GM12878 (cell line): ENCODE measurements at regions of chr22 and their contacts with region 1.

Region 1: DNA sequence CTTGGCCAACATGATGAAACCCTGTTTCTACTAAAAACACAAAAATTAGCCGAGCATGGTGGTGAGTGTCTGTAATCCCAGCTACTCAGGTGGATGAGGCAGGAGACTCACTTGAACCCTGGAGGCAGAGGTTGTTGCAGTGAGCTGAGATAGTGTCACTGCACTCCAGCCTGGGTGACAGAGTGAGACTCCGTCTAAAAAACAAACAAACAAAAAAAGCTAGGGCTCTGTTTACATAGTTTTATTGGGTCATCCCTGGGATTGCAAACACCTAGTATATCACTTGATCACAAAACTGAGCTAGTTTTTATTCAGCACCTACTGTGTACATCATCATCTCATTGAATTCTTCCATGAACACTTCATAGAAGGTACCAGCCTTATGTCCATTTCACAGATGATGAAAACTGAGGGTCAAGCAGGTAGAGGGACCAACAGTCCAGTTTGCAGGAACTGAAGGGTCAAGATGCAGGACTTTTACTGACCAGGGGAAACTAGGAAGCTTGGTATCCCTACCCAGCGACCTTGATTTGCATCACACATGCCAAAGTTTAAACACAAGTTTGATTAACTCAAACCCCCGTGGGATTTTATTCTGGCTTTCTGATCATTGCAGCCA is 9.2 kb upstream of the MRTFA start:
- DNase-seq: no peak
- ATAC-seq: no peak
- H3K4me3 ChIP-seq: no peak overlapping the region
- H3K27ac ChIP-seq: no peak overlapping the region
- H3K4me1 ChIP-seq: peaks cover 18% of the 10 kb centered on the region
- H3K27me3 ChIP-seq: no peaks in the 10 kb centered on the region
- CTCF ChIP-seq: no peak
- EP300 ChIP-seq: no peak
- POLR2A ChIP-seq: no peak
- RAD21 ChIP-seq: no peak

Region 2: GRCh38 chr22:40231618-40232313 is 413.9 kb before region 1 on chr22:
- CTCF ChIA-PET with region 1: no interaction called
- POLR2A ChIA-PET with region 1: no interaction called
- RAD21 ChIA-PET with region 1: no interaction called
- SMC1A ChIA-PET with region 1: no interaction called
- in situ Hi-C with region 1: no loop called
- intact Hi-C with region 1: no loop called
- DNase-seq: no peak
- ATAC-seq: no peak
- H3K4me3 ChIP-seq: no peak overlapping the region
- H3K27ac ChIP-seq: no peak overlapping the region
- H3K4me1 ChIP-seq: no peaks in the 10 kb centered on the region
- H3K27me3 ChIP-seq: no peaks in the 10 kb centered on the region
- CTCF ChIP-seq: no peak
- EP300 ChIP-seq: no peak
- POLR2A ChIP-seq: no peak
- RAD21 ChIP-seq: no peak

Region 3: GRCh38 chr22:40289991-40290459 is 355.7 kb before region 1 on chr22:
- CTCF ChIA-PET with region 1: no interaction called
- POLR2A ChIA-PET with region 1: no interaction called
- RAD21 ChIA-PET with region 1: no interaction called
- SMC1A ChIA-PET with region 1: no interaction called
- in situ Hi-C with region 1: no loop called
- intact Hi-C with region 1: no loop called
- DNase-seq: peak; percentile 26
- ATAC-seq: peak; percentile 97
- H3K4me3 ChIP-seq: no peak overlapping the region
- H3K27ac ChIP-seq: peak overlapping the region; percentile 59
- H3K4me1 ChIP-seq: no peaks in the 10 kb centered on the region
- H3K27me3 ChIP-seq: no peaks in the 10 kb centered on the region
- CTCF ChIP-seq: no peak
- EP300 ChIP-seq: no peak
- POLR2A ChIP-seq: no peak
- RAD21 ChIP-seq: no peak

Region 4: GRCh38 chr22:40487663-40488249 is 157.9 kb before region 1 on chr22:
- CTCF ChIA-PET with region 1: interaction called, 34 read pairs
- POLR2A ChIA-PET with region 1: interaction called, 5 read pairs
- RAD21 ChIA-PET with region 1: interaction called, 10 read pairs
- SMC1A ChIA-PET with region 1: interaction called, 28 read pairs
- in situ Hi-C with region 1: no loop called
- intact Hi-C with region 1: no loop called
- DNase-seq: no peak
- ATAC-seq: peak; percentile 48; the same call in 2 of the 3 replicates
- H3K4me3 ChIP-seq: no peak overlapping the region
- H3K27ac ChIP-seq: no peak overlapping the region
- H3K4me1 ChIP-seq: peaks cover 11% of the 10 kb centered on the region
- H3K27me3 ChIP-seq: no peaks in the 10 kb centered on the region
- CTCF ChIP-seq: peak; percentile 67 to 82 (median 67)
- EP300 ChIP-seq: no peak
- POLR2A ChIP-seq: no peak
- RAD21 ChIP-seq: peak; percentile 65

Region 5: GRCh38 chr22:40519284-40519947 is 126.3 kb before region 1 on chr22:
- CTCF ChIA-PET with region 1: interaction called, 339 read pairs
- POLR2A ChIA-PET with region 1: interaction called, 8 read pairs
- RAD21 ChIA-PET with region 1: interaction called, 137 read pairs
- SMC1A ChIA-PET with region 1: interaction called, 248 read pairs
- in situ Hi-C with region 1: no loop called
- intact Hi-C with region 1: loop called (anchors 1 kb)
- DNase-seq: no peak
- ATAC-seq: peak; percentile 93
- H3K4me3 ChIP-seq: peak overlapping the region; percentile 48; the same call in 1 of the 2 replicates
- H3K27ac ChIP-seq: peak overlapping the region; percentile 83
- H3K4me1 ChIP-seq: peaks cover 18% of the 10 kb centered on the region
- H3K27me3 ChIP-seq: no peaks in the 10 kb centered on the region
- CTCF ChIP-seq: no peak
- EP300 ChIP-seq: no peak
- POLR2A ChIP-seq: no peak
- RAD21 ChIP-seq: no peak

Region 6: DNA sequence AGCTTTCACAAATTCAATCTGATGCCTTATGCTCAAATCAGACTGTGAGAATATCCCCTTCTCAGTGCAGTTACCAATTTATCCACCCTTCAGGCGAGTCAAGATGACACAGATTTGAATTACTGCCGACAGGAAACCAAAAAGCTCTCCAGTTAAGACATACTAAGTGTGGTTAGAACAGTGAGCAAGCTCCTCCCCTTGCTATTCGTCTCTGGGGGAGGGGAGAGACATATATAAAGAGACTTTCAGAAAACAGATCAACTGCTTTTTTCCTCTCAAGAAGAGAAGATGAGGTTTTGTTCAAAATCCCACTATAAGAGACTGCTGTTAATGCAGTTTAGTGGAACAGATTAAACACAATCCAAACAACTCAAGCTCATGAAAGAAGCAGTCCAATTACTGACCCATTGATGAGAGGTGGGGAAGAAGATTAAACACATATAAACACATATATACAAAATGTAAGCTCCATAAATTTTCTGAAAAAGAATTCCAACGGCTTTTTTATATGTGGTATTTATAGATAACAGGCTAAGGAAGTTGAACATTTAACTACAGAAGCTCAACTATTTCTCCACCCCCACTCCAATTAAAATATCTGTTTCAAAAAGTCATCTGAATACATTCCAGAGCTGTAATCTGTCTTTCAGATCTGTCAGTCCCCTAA is 111.8 kb before region 1 on chr22:
- CTCF ChIA-PET with region 1: interaction called, 339 read pairs
- POLR2A ChIA-PET with region 1: interaction called, 11 read pairs
- RAD21 ChIA-PET with region 1: interaction called, 137 read pairs
- SMC1A ChIA-PET with region 1: interaction called, 248 read pairs
- in situ Hi-C with region 1: loop called (anchors 5 kb)
- intact Hi-C with region 1: no loop called
- DNase-seq: peak; percentile 74
- ATAC-seq: peak; percentile 88
- H3K4me3 ChIP-seq: peak overlapping the region; percentile 76
- H3K27ac ChIP-seq: peak overlapping the region; percentile 75
- H3K4me1 ChIP-seq: peaks cover 21% of the 10 kb centered on the region
- H3K27me3 ChIP-seq: no peaks in the 10 kb centered on the region
- CTCF ChIP-seq: no peak
- EP300 ChIP-seq: no peak
- POLR2A ChIP-seq: no peak
- RAD21 ChIP-seq: peak; percentile 15; the same call in 1 of the 2 replicates

Region 7: GRCh38 chr22:40597526-40598430 is 47.9 kb before region 1 on chr22:
- CTCF ChIA-PET with region 1: interaction called, 25 read pairs
- POLR2A ChIA-PET with region 1: no interaction called
- RAD21 ChIA-PET with region 1: interaction called, 7 read pairs
- SMC1A ChIA-PET with region 1: interaction called, 11 read pairs
- in situ Hi-C with region 1: no loop called
- intact Hi-C with region 1: no loop called
- DNase-seq: no peak
- ATAC-seq: no peak
- H3K4me3 ChIP-seq: no peak overlapping the region
- H3K27ac ChIP-seq: no peak overlapping the region; the same call in 1 of the 2 replicates
- H3K4me1 ChIP-seq: peaks cover 54% of the 10 kb centered on the region
- H3K27me3 ChIP-seq: no peaks in the 10 kb centered on the region
- CTCF ChIP-seq: 0 out of 6 replicates have a peak, but pooled peaks of 1 of the 3 experiments have one; percentile 0
- EP300 ChIP-seq: no peak
- POLR2A ChIP-seq: no peak
- RAD21 ChIP-seq: no peak

Region 8: GRCh38 chr22:40679964-40680818 is 34.5 kb after region 1 on chr22:
- CTCF ChIA-PET with region 1: interaction called, 13 read pairs
- POLR2A ChIA-PET with region 1: interaction called, 3 read pairs
- RAD21 ChIA-PET with region 1: interaction called, 6 read pairs
- SMC1A ChIA-PET with region 1: interaction called, 3 read pairs
- in situ Hi-C with region 1: no loop called
- intact Hi-C with region 1: no loop called
- DNase-seq: no peak
- ATAC-seq: no peak
- H3K4me3 ChIP-seq: no peak overlapping the region
- H3K27ac ChIP-seq: no peak overlapping the region
- H3K4me1 ChIP-seq: no peaks in the 10 kb centered on the region
- H3K27me3 ChIP-seq: peaks cover 0 to 3% of the 10 kb centered on the region in 2 experiments; a peak in 3 of 4 replicates
- CTCF ChIP-seq: no peak
- EP300 ChIP-seq: no peak
- POLR2A ChIP-seq: no peak
- RAD21 ChIP-seq: no peak

Region 9: DNA sequence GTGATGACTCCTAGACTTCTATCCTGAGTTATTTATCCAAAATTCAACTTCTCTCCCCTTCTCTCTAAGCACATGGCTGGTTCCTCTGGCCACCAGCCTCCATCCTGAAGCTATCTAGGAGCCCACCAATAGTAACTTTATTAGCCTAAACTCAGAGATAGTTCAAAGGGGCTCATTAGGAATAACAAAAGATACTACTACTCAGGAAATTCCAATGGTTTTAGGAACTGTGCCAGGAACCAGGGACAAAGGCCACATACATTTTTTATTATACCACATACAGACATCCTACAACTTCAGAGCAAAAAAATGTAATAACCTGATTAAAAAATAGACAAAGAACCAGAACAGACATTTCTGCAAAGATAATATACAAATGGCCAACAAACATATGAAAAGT is 145.6 kb after region 1 on chr22:
- CTCF ChIA-PET with region 1: no interaction called
- POLR2A ChIA-PET with region 1: no interaction called
- RAD21 ChIA-PET with region 1: no interaction called
- SMC1A ChIA-PET with region 1: no interaction called
- in situ Hi-C with region 1: no loop called
- intact Hi-C with region 1: no loop called
- DNase-seq: no peak
- ATAC-seq: no peak
- H3K4me3 ChIP-seq: no peak overlapping the region
- H3K27ac ChIP-seq: no peak overlapping the region
- H3K4me1 ChIP-seq: no peaks in the 10 kb centered on the region; the same call in 1 of the 2 replicates
- H3K27me3 ChIP-seq: no peaks in the 10 kb centered on the region
- CTCF ChIP-seq: no peak
- EP300 ChIP-seq: no peak
- POLR2A ChIP-seq: no peak
- RAD21 ChIP-seq: no peak